ENCODE measurements at regions of chr4 and their contacts with region 1.

Region 1: DNA sequence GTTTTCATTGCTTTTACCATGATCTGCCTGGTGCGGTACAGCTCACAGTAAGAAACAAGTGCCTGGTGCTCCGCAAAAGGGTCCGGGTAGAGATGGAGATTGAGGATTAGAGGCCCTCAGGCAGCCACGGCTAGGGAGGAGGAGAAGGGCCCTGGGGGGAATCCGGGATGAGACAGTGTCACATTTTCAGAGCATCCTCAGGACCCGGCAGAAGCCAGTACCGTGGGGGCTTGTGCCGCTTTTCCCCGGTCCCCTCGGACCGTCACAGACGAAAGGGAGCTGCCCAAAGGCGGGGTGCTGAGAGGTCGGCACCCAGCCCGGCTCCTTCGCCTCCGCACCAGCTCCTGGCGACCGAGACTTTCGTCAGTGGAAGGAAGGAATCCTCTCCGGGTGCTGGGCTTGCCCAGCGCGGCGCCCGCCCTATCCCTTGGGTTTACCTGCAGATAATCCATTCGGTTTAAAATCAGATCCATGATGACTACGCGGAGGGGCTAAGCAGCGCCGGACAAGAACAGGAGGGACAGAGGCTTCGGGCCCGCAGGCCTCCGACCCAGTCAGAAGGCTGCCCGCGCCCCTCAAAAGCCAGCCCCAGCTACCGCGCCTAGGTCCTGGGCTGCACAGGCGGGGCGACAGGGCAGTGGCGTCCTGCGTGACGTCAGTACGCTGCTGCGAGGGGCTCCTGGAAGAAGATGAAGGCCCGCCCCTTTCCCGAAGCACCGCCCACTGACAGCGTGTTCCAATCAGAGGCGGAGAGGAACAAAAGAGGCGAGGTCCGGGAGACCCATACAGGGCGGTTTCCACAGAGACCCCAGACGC is at the start of gene BBS7:
- DNase-seq: peak; percentile 91 to 98 (median 96)
- ATAC-seq: peak; percentile 99
- H3K4me3 ChIP-seq: peak within 1 kb of the TSS; percentile 88 to 92
- H3K4me3 Mint-ChIP-seq: peak within 1 kb of the TSS; percentile 97
- H3K27ac ChIP-seq: peak within 1 kb of the TSS; percentile 74 to 79
- H3K27ac Mint-ChIP-seq: peak within 1 kb of the TSS; percentile 92
- H3K4me1 ChIP-seq: peaks cover 6% of the 10 kb centered on the region
- H3K4me1 Mint-ChIP-seq: peaks cover 14% of the 10 kb centered on the region
- H3K27me3 ChIP-seq: no peaks in the 10 kb centered on the region
- H3K27me3 Mint-ChIP-seq: peaks cover 7% of the 10 kb centered on the region
- CTCF ChIP-seq: no peak
- total RNA-seq, gene BBS7: 3.4 to 4.7 TPM

Region 2: DNA sequence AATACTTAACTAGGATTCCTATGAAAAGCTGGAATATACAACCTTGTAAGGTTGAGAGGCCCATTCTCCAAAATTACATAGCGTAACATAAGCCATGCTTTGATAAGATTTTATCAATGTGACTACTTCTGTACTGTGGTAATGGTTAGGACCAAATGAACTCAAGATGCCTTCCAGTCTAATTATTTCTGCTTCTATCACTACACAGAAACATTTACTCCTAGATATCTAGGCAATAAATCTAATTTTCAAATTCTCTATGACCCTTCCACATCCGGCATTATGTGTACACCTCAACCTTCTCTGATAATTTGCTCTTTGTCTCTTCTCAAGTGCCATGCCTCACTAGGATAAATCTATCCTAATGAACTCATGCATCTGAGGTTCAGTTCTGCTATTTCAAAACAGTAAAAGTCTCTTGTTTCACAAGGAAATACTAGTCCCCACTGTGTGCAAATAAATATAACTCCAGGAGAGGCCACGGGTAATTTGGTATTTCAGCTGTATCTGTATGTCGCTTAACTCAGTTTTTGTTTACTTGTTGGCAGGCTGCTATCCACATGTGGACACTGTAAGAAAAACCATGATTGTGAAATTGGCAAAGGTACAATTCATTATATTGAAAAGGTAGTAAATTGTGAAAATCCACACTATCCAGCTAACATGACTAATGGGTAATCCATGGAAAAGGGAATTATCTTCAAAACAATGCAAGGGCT is 1040.8 kb before region 1 on chr4:
- CTCF ChIA-PET with region 1: no interaction called
- POLR2A ChIA-PET with region 1: no interaction called
- intact Hi-C with region 1: no loop called
- DNase-seq: no peak
- ATAC-seq: no peak
- H3K4me3 ChIP-seq: no peak overlapping the region
- H3K4me3 Mint-ChIP-seq: no peak overlapping the region
- H3K27ac ChIP-seq: no peak overlapping the region
- H3K27ac Mint-ChIP-seq: no peak overlapping the region
- H3K4me1 ChIP-seq: no peaks in the 10 kb centered on the region
- H3K4me1 Mint-ChIP-seq: no peaks in the 10 kb centered on the region
- H3K27me3 ChIP-seq: no peaks in the 10 kb centered on the region
- H3K27me3 Mint-ChIP-seq: no peaks in the 10 kb centered on the region
- CTCF ChIP-seq: no peak

Region 3: DNA sequence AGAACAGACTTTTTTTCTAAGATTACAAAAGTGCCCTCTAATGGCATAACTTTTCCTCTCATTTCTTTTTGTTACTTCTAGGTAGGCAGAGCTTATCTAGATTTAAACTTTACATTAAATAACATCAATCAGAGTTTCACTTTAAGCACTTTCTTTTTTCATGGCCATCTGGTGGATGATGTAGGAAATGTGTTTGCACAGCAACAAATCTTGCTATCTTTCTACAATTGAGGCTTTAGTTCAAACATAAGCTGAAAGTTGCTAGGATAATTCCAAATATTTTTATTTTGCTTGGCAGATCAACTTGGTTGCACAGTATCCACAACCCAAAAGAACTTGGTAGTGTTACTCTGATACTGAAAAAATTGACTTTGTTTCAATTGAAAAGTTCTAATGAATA is 819.7 kb before region 1 on chr4:
- CTCF ChIA-PET with region 1: no interaction called
- POLR2A ChIA-PET with region 1: no interaction called
- intact Hi-C with region 1: no loop called
- DNase-seq: peak in 2 of 9 experiments; percentile 28 to 50
- ATAC-seq: no peak
- H3K4me3 ChIP-seq: no peak overlapping the region
- H3K4me3 Mint-ChIP-seq: no peak overlapping the region
- H3K27ac ChIP-seq: no peak overlapping the region
- H3K27ac Mint-ChIP-seq: no peak overlapping the region
- H3K4me1 ChIP-seq: no peaks in the 10 kb centered on the region
- H3K4me1 Mint-ChIP-seq: peaks cover 8% of the 10 kb centered on the region
- H3K27me3 ChIP-seq: no peaks in the 10 kb centered on the region
- H3K27me3 Mint-ChIP-seq: peaks cover 2% of the 10 kb centered on the region
- CTCF ChIP-seq: peak; percentile 42

Region 4: DNA sequence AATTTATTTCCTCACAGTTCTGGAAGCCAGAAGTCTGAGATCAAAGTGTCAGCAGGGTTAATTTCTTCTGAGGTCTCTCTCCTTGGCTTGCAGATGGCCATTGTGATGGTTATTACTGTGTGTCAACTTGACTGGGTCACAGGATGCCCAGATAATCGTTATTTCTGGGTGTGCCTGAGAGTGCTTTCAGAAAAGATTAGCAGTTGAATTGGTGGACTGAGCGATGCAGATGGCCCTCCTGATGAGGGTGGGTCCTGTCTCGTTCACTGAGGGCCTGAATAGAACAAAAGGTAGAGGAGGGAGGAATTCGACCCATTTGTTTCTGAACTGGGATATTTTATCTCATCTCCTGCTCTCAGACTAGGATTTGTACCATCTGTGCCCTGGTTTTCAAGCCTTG is 120.8 kb before region 1 on chr4:
- CTCF ChIA-PET with region 1: no interaction called
- POLR2A ChIA-PET with region 1: no interaction called
- intact Hi-C with region 1: no loop called
- DNase-seq: no peak
- ATAC-seq: no peak
- H3K4me3 ChIP-seq: no peak overlapping the region
- H3K4me3 Mint-ChIP-seq: no peak overlapping the region
- H3K27ac ChIP-seq: no peak overlapping the region
- H3K27ac Mint-ChIP-seq: no peak overlapping the region
- H3K4me1 ChIP-seq: no peaks in the 10 kb centered on the region
- H3K4me1 Mint-ChIP-seq: no peaks in the 10 kb centered on the region
- H3K27me3 ChIP-seq: peaks cover 0 to 3% of the 10 kb centered on the region in 2 experiments
- H3K27me3 Mint-ChIP-seq: peaks cover 27% of the 10 kb centered on the region
- CTCF ChIP-seq: no peak

Region 5: DNA sequence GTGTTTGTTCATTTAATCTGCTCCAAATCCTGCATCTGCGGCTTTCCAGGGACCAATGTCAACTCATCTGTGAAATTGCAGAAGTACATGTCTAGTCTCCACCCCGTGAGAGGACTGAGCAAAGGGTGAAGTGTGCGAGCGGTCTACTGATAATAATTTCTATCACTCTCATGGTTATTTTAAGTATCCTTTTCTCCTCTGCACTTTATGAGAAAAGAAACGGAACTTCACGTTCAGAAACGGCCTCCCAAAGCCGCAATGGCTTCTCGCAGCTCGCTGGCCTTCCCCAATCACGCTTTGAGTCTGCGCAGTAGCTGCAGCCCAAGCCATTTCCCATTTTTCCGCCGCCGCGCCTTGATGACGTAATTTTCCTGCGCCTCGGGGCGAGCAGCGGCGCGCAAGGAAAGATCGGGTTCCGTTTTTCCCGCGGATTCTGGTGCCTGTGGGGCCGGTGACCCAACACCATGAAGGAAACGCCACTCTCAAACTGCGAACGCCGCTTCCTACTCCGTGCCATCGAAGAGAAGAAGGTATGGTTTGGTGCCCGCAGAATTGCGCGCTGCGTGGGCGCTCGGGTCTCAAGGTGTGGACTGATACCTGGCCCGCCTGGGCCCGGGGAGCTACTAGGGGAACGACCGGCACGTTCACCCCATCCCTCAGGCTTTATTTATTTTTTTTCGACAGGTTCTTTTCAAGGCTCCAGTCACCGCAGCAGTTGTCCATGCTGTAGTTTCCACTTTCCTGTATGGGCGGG is 68.9 kb before region 1 on chr4 and contains the start of gene EXOSC9:
- CTCF ChIA-PET with region 1: no interaction called
- POLR2A ChIA-PET with region 1: no interaction called
- intact Hi-C with region 1: loop called (anchors 1 to 5 kb)
- DNase-seq: peak; percentile 91 to 98 (median 95)
- ATAC-seq: peak; percentile 83
- H3K4me3 ChIP-seq: peak within 1 kb of the TSS; percentile 83 to 88
- H3K4me3 Mint-ChIP-seq: peak within 1 kb of the TSS; percentile 89
- H3K27ac ChIP-seq: peak within 1 kb of the TSS; percentile 90 to 93
- H3K27ac Mint-ChIP-seq: peak within 1 kb of the TSS; percentile 99
- H3K4me1 ChIP-seq: peaks cover 31% of the 10 kb centered on the region
- H3K4me1 Mint-ChIP-seq: peaks cover 40% of the 10 kb centered on the region
- H3K27me3 ChIP-seq: no peaks in the 10 kb centered on the region
- H3K27me3 Mint-ChIP-seq: no peaks in the 10 kb centered on the region
- CTCF ChIP-seq: no peak
- total RNA-seq, gene EXOSC9: 76.9 to 80.5 TPM

Region 6: DNA sequence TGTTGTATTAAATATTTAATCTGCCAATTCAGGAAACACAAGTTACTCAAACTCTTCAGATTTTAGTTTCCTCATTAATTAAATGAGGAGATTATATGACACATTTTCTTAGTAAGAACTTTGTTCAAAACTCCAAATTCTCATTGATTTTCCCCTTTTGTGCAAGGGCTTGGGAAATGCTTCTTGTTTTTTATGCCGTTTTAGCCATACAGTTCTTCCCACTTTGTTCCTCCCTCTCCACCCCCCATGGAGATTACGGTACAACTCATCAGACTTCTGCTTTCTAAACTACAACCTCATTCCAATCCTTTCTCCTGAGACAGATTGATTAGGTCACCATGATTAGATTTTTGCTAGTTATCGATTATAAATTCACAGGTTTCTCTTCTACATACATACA is 11.1 kb after region 1 on chr4:
- CTCF ChIA-PET with region 1: no interaction called
- POLR2A ChIA-PET with region 1: no interaction called
- intact Hi-C with region 1: no loop called
- DNase-seq: no peak
- ATAC-seq: no peak
- H3K4me3 ChIP-seq: no peak overlapping the region
- H3K4me3 Mint-ChIP-seq: no peak overlapping the region
- H3K27ac ChIP-seq: no peak overlapping the region
- H3K27ac Mint-ChIP-seq: no peak overlapping the region
- H3K4me1 ChIP-seq: no peaks in the 10 kb centered on the region
- H3K4me1 Mint-ChIP-seq: no peaks in the 10 kb centered on the region
- H3K27me3 ChIP-seq: no peaks in the 10 kb centered on the region
- H3K27me3 Mint-ChIP-seq: peaks cover 42% of the 10 kb centered on the region
- CTCF ChIP-seq: no peak

Measured in CD8-positive, alpha-beta T cell (primary cell).